GM10248 (cell line): ENCODE measurements at regions of chr3 and their contacts with region 1.

Region 1: DNA sequence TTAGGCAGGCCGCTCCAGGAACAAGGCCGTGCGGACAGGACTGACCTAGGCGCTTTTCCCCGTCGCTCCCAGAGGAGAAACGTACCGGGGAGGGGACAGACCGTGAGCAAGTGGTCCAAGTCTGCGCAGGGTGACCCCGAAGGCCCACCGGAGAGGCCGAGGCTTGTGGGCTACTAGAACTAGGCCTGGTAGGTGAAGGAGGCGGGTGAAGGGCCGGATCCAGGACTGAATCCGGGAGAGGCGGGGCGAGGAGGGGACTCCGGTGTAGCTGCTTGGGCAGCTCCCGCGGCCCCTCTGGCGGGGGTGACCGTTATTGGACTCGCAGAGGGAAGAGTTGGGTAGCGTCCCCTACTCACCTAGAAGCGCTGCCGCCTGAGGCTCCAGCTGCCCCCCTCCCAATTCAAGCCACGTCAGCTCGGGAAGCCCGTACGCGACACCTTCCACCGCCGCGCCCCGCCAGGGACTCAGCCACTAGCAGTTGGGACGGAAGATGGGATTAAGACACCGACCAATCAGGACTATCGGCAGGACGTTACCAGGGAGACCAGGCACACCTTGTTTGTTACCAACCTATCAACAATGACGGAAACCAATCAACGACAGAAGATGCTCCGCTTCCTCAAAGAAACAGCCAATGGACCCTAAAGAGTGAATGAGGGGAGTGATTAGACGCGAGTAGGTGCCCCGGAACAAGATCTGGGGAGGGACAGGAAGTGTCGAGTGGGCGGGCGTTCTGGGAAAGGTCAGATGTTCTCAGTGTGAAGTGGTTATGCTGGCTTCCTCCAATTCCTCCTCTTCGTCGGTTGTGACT is at the start of gene GOLGB1:
- DNase-seq: peak; percentile 96
- CTCF ChIP-seq: no peak

Region 2: GRCh38 chr3:121724130-121724529 is 25.4 kb before region 1 on chr3:
- CTCF ChIA-PET with region 1: interaction called, 11 read pairs
- POLR2A ChIA-PET with region 1: interaction called, 5 read pairs
- DNase-seq: peak; percentile 43
- CTCF ChIP-seq: no peak

Region 3: GRCh38 chr3:121781611-121782010 is 32.1 kb after region 1 on chr3:
- CTCF ChIA-PET with region 1: no interaction called
- POLR2A ChIA-PET with region 1: no interaction called
- DNase-seq: no peak
- CTCF ChIP-seq: no peak